ENCODE measurements at regions of chr14 and their contacts with region 1.

Region 1: GRCh38 chr14:96056509-96057422 is 17.6 kb downstream of the C14orf132 start:
- DNase-seq: no peak
- H3K4me3 Mint-ChIP-seq: no peak overlapping the region
- H3K27ac Mint-ChIP-seq: no peak overlapping the region
- H3K4me1 Mint-ChIP-seq: no peaks in the 10 kb centered on the region
- H3K27me3 Mint-ChIP-seq: no peaks in the 10 kb centered on the region

Region 2: DNA sequence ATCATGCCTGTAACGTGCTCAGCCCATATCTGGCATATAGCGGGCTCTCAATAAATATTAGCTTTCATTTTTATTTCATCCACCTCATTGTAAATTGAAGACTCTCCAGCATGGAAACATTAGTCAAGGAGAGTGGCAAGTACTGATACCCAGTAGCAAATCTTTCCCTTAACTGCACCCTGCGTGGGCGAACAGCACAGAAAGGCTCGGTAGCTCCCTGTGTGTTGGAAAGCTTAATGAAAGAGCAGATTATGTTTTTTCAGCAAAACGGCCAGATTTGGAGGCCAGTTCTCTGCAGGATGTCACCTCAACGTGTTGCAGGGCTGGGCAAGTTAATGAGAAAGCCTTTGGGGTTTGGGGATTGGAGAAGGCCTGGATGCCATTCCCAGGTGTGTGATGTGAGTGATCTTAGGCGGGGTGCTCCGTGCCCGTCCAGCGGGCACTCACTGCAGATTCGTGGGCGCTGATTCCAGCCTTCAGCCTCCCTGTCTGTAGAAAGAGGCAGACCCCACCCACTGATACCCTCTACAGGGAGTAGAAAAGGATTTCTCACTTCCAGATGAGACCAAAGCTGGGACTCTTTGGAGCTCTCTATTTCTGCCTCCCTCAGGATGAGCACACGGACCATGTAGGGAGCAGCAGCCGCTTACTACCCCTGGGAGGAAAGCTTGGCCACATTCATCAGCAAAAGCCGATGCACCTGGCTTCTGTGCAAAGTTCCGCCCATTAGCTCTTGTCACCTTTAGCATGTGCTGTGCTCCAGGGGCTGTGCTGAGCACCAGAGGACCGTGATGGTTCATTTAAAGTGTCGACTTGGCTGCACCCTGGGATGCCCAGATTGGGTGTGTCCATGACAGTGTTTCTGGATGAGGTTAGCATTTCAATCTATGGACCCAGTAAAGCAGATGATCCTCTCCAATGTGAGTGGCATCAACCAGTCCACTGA is 11.5 kb after region 1 on chr14:
- CTCF ChIA-PET with region 1: no interaction called
- DNase-seq: no peak
- H3K4me3 Mint-ChIP-seq: no peak overlapping the region
- H3K27ac Mint-ChIP-seq: peak overlapping the region; percentile 16
- H3K4me1 Mint-ChIP-seq: no peaks in the 10 kb centered on the region
- H3K27me3 Mint-ChIP-seq: peaks cover 8% of the 10 kb centered on the region

Region 3: DNA sequence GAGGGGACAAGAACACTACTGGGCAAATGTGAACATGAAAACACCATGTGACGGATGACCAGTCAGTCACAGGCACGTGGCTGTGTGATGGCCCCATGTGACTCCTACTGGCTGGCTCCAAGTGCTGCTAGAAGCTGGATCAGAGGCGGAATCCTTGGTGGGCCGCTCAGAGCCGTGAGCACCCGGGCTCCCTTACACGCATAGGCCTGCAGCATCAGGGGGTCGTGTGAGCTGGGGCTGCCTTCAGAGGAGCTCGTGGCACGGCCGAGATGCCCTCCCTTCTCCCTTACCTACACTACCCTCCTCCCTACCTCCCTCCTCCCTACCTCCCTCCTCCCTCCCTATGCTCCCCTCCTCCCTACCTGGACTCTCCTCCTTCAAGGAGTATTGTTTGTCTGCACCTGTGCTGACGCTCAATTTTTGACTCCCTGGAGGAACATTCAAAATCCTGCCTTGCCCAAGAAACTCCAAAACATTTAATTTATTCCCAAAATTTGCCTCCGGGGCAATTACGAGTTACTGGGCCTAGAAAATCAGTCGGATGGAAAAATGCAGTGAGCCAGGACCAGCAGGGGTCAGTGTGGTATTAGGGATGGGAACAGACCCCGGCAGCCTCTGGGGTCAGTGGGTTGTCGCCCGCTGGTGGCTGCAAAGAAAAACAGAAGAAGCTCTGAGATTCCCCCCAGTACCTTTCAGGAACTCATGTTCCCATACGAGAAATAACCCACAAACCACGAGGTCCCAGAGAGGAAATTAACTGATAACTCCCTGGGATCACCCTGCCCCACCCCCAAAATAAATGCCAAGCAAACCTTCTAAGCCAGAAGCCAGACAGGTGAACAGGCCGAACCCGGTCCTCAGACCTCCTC is 43.6 kb after region 1 on chr14:
- CTCF ChIA-PET with region 1: interaction called, 11 read pairs
- DNase-seq: peak; percentile 71
- H3K4me3 Mint-ChIP-seq: no peak overlapping the region
- H3K27ac Mint-ChIP-seq: no peak overlapping the region
- H3K4me1 Mint-ChIP-seq: no peaks in the 10 kb centered on the region
- H3K27me3 Mint-ChIP-seq: peaks cover 5% of the 10 kb centered on the region